Adrenal gland (tissue), 19 donors: ENCODE measurements at regions of chr1 and their contacts with region 1.

Region 1: GRCh38 chr1:84433258-84434080 is 35.2 kb downstream of the DNASE2B start:
- DNase-seq: peak; percentile 61 to 92 (median 72)
- H3K4me3 ChIP-seq: peak overlapping the region in 1 of 4 donors; percentile 20
- H3K27ac ChIP-seq: peak overlapping the region in 3 of 5 donors; percentile 1 to 69 (median 49)
- H3K4me1 ChIP-seq: peaks cover 0 to 15% of the 10 kb centered on the region in 2 donors
- H3K27me3 ChIP-seq: no peaks in the 10 kb centered on the region
- CTCF ChIP-seq: peak; percentile 66 to 89 (median 82)
- POLR2A ChIP-seq: no peak

Region 2: GRCh38 chr1:84133479-84133878 is 300.0 kb before region 1 on chr1:
- intact Hi-C with region 1: loop called in 1 of 2 experiments (anchors 5 kb)
- DNase-seq: no peak
- H3K4me3 ChIP-seq: no peak overlapping the region
- H3K27ac ChIP-seq: no peak overlapping the region
- H3K4me1 ChIP-seq: no peaks in the 10 kb centered on the region
- H3K27me3 ChIP-seq: no peaks in the 10 kb centered on the region
- CTCF ChIP-seq: no peak
- POLR2A ChIP-seq: no peak

Region 3: DNA sequence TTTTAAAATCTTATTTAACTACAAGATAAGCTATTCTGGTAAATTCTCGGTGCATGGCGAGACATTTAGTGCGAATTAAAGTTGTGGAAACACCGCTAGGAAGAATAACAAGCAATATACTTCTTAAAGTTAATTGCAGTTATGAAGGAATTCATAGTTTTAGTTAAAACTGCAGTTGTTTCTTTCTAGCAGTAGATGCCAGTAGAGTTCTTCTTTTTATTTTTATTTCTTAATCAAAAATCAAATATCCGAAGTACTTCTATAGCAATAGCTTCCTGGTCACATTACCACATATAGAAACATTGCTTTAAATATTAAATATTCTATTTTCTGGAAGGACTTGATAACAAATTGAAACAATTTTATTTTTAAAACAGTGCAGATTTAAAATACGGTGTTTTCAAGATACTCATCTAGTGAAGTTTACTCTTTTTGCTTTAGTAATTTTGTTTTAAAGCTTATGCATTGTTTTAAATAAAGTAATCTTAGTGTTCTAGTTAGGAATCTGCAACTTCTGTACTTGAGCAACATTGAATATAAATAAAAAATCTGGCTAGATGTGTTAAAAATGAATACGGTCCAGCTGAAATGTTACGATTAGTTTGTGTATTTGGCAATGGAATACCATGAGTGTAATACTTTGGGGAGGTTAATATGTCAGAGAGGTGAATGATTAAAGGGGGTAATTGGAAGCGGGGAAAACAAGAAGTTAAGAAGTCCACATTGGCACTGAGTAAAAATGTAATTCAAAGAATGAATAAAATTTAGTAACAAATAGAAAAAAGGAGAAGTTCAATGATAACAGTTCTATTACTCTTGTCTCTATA is 292.1 kb before region 1 on chr1:
- intact Hi-C with region 1: loop called (anchors 2 to 5 kb)
- DNase-seq: no peak
- H3K4me3 ChIP-seq: no peak overlapping the region
- H3K27ac ChIP-seq: no peak overlapping the region
- H3K4me1 ChIP-seq: peaks cover 0 to 13% of the 10 kb centered on the region in 2 donors
- H3K27me3 ChIP-seq: no peaks in the 10 kb centered on the region
- CTCF ChIP-seq: peak; percentile 25 to 79 (median 62)
- POLR2A ChIP-seq: no peak

Region 4: DNA sequence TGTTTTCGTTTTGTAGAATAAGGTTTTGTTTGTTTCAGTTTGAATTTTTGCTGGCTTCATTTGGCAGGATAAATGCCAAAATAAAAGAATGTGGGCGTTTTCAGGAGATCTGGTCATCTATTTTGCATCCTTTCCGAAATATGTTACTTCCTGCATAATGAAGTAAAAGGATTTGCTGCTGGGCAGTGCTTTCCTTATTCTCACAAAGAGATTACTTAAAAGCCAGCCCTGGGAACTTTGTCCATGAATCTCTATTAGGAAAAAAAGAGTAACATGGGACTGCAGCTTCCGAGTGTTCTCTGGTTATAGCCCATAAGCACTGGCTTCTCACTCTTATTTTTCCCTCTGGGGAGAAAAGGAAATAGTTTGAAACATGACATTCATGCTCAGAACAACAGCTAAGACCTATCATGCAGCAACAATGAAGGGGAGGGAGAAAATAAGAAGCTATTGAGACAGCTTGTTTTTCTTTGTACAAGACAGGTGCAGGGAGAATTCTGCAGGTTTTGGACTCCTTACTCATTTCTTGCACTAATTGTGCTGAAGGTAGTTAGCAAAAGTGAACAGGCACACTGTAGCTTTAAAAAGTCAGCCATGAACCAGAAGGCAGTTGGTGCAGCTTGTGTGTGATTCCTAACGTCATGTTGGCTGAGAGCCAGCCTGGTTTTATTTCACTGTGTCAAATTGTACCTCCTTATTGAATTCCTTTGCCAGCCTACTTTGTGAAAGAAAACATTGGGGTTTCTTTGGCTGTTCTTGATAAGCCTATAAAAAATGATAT is 132.3 kb before region 1 on chr1 and contains the start of gene SAMD13:
- intact Hi-C with region 1: loop called in 1 of 2 experiments (anchors 10 kb)
- DNase-seq: peak; percentile 83 to 95 (median 90)
- H3K4me3 ChIP-seq: peak within 1 kb of the TSS in 2 of 4 donors; percentile 22 to 53
- H3K27ac ChIP-seq: peak within 1 kb of the TSS in 4 of 5 donors; percentile 2 to 63 (median 42)
- H3K4me1 ChIP-seq: peaks cover 12 to 35% of the 10 kb centered on the region in 2 donors
- H3K27me3 ChIP-seq: no peaks in the 10 kb centered on the region
- CTCF ChIP-seq: no peak
- POLR2A ChIP-seq: no peak
- total RNA-seq, gene SAMD13: 1.3 to 8.0 (median 4.5) TPM